ENCODE measurements at regions of chr17 and their contacts with region 1.

Region 1: DNA sequence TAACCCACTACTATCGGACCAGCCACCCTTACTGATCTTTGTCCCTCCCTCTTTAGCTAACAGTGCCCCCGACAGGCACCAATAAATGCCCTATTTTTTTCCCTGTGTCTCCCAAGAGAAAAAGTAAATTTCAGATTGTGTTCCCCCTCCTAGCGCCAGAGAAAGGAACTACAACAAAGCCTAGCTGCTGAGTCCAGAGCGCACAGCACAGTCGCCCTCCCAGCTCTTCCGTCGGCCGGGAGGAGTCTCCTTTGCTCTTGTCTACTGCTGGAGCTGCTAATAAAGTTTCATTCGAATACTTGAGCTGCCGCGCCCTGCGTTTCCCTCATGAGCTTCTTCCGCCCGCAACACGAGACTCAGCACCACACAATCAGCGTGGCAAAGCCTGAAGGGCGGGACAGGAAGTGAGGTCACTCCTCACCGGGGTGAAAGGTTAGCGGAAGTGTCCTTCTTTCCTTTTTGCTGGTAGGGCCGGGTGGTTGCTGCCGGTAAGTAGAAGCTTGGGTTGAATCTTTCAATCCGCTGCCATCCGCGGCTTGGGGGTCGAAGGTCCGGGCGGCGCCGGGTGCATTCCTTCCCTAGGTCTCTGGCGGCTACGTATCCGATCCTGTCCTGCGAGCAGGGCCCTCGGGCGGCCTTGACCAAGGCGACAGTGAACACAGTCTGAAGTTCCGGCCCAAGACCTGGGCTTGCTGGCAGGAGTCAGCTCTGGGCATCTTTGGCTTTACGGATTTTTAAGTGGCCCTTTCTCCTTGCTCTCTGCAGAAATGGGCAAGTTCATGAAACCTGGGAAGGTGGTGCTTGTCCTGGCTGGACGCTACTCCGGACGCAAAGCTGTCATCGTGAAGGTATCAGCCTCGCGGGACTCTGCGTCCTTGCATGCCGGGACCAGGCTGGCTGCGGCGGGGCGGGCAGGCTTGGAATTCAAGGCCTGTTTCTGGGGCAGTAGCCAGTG is at the start of gene RPL27:
- DNase-seq: peak; percentile 89 to 99 (median 98)
- ATAC-seq: peak; percentile 97
- H3K4me3 ChIP-seq: peak within 1 kb of the TSS; percentile 91
- H3K4me3 Mint-ChIP-seq: peak within 1 kb of the TSS; percentile 74 to 98 (median 95)
- H3K27ac ChIP-seq: peak within 1 kb of the TSS; percentile 97
- H3K27ac Mint-ChIP-seq: peak within 1 kb of the TSS; percentile 89 to 100 (median 99)
- H3K4me1 ChIP-seq: peaks cover 15 to 18% of the 10 kb centered on the region in 2 donors
- H3K4me1 Mint-ChIP-seq: peaks cover 16 to 29% (median 24%) of the 10 kb centered on the region in 7 donors
- H3K27me3 ChIP-seq: no peaks in the 10 kb centered on the region
- H3K27me3 Mint-ChIP-seq: no peaks in the 10 kb centered on the region
- total RNA-seq, gene RPL27: 951 to 1,861 (median 1,662) TPM

Region 2: DNA sequence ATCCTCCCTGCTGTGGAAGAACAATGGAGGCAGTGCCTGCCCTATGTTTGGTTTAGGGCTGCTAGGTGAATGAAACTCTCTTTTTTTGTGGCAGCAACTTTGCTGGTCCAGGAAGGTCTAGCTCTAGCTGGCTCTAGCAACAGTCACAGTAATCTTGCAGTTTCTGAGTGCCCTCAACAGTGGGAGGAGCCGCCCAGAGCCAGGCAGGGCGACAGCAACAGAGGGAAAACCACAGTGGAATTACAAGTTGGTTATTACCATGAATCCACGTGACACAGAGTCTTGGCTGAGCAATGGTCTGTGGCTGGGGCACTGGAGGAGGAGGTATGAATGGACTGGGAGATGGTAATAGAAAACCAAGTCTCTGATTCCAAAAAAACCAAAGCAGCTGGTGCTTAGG is 865.3 kb before region 1 on chr17:
- CTCF ChIA-PET with region 1: no interaction called
- POLR2A ChIA-PET with region 1: no interaction called
- intact Hi-C with region 1: no loop called
- DNase-seq: peak in 1 of 9 donors; percentile 37
- ATAC-seq: peak; percentile 58
- H3K4me3 ChIP-seq: no peak overlapping the region
- H3K4me3 Mint-ChIP-seq: peak overlapping the region in 7 of 10 donors; percentile 12 to 63 (median 41)
- H3K27ac ChIP-seq: peak overlapping the region; percentile 46
- H3K27ac Mint-ChIP-seq: peak overlapping the region; percentile 65 to 89 (median 84)
- H3K4me1 ChIP-seq: peaks cover 16 to 22% of the 10 kb centered on the region in 2 donors
- H3K4me1 Mint-ChIP-seq: peaks cover 34 to 66% (median 54%) of the 10 kb centered on the region in 7 donors
- H3K27me3 ChIP-seq: no peaks in the 10 kb centered on the region
- H3K27me3 Mint-ChIP-seq: no peaks in the 10 kb centered on the region

Region 3: GRCh38 chr17:42577532-42578281 is 420.6 kb before region 1 on chr17 and contains the start of gene PSMC3IP:
- CTCF ChIA-PET with region 1: interaction called, 3 read pairs
- POLR2A ChIA-PET with region 1: no interaction called
- intact Hi-C with region 1: loop called in 1 of 2 experiments (anchors 5 kb)
- DNase-seq: peak; percentile 74 to 95 (median 85)
- ATAC-seq: peak; percentile 98
- H3K4me3 ChIP-seq: peak within 1 kb of the TSS; percentile 96
- H3K4me3 Mint-ChIP-seq: peak within 1 kb of the TSS; percentile 86 to 100 (median 96)
- H3K27ac ChIP-seq: peak within 1 kb of the TSS; percentile 87
- H3K27ac Mint-ChIP-seq: peak within 1 kb of the TSS; percentile 86 to 99 (median 96)
- H3K4me1 ChIP-seq: peaks cover 9 to 12% of the 10 kb centered on the region in 2 donors
- H3K4me1 Mint-ChIP-seq: peaks cover 17 to 53% (median 40%) of the 10 kb centered on the region in 7 donors
- H3K27me3 ChIP-seq: no peaks in the 10 kb centered on the region
- H3K27me3 Mint-ChIP-seq: no peaks in the 10 kb centered on the region
- total RNA-seq, gene PSMC3IP: 2.7 to 14.0 (median 5.2) TPM

Region 4: DNA sequence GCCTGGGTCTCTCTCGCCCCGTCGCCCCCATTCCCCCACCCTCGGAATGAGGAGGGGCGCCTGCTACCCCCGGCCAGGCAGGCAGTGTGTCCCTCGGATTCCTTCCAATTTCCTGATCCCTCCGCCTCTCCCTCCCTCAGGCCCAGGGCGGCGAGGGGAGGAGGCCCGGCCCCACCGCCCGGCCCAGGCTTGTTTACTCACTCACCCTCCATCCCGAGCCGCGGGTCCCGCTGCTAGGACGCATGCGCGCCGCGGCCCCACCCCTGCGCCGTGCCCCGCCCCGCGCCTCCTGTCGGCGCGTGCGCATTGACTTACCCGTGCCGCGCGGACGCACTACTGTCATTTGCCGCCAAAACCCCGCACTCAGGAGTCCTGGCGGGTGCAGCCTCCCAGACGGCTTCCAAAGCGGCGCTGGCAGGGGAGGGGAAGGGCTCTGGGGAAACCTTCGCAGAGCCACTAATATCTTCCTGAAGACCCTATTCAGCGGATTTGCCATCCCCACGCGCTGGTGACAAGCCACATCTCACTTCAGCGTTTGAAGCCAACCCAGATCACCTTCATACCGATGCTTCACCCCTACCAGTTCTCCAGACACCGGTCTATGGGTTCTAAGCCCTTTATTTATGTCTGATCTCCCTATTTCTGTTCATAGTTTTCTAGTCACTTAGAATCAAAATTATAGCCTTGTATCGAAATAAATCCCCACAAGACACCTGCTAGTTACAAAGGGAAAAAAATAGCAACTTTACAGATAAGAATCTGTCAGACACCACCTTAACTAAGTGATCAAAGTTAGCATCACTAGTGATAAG is 253.2 kb before region 1 on chr17 and contains the start of gene EZH1:
- CTCF ChIA-PET with region 1: no interaction called
- POLR2A ChIA-PET with region 1: no interaction called
- intact Hi-C with region 1: loop called in 1 of 2 experiments (anchors 1 kb)
- DNase-seq: peak; percentile 88 to 96 (median 94)
- ATAC-seq: peak; percentile 97
- H3K4me3 ChIP-seq: peak within 1 kb of the TSS; percentile 78
- H3K4me3 Mint-ChIP-seq: peak within 1 kb of the TSS; percentile 83 to 99 (median 94)
- H3K27ac ChIP-seq: peak within 1 kb of the TSS; percentile 90
- H3K27ac Mint-ChIP-seq: peak within 1 kb of the TSS; percentile 86 to 97 (median 94)
- H3K4me1 ChIP-seq: peaks cover 12 to 16% of the 10 kb centered on the region in 2 donors
- H3K4me1 Mint-ChIP-seq: peaks cover 15 to 34% (median 22%) of the 10 kb centered on the region in 7 donors
- H3K27me3 ChIP-seq: no peaks in the 10 kb centered on the region
- H3K27me3 Mint-ChIP-seq: peaks cover 0 to 41% (median 11%) of the 10 kb centered on the region in 5 donors
- total RNA-seq, gene EZH1: 50.9 to 212 (median 95.4) TPM

Region 5: GRCh38 chr17:42964161-42964932 is 33.9 kb before region 1 on chr17 and contains the start of gene AARSD1:
- CTCF ChIA-PET with region 1: interaction called, 3 read pairs
- POLR2A ChIA-PET with region 1: interaction called, 8 read pairs
- intact Hi-C with region 1: loop called (anchors 1 kb)
- DNase-seq: peak; percentile 77 to 92 (median 90)
- ATAC-seq: peak; percentile 99
- H3K4me3 ChIP-seq: peak within 1 kb of the TSS; percentile 96
- H3K4me3 Mint-ChIP-seq: peak within 1 kb of the TSS; percentile 89 to 99 (median 94)
- H3K27ac ChIP-seq: peak within 1 kb of the TSS; percentile 77
- H3K27ac Mint-ChIP-seq: peak within 1 kb of the TSS; percentile 86 to 97 (median 94)
- H3K4me1 ChIP-seq: peaks cover 5 to 10% of the 10 kb centered on the region in 2 donors
- H3K4me1 Mint-ChIP-seq: peaks cover 11 to 23% (median 18%) of the 10 kb centered on the region in 7 donors
- H3K27me3 ChIP-seq: no peaks in the 10 kb centered on the region
- H3K27me3 Mint-ChIP-seq: peaks cover 0 to 2% (median 0%) of the 10 kb centered on the region in 5 donors
- total RNA-seq, gene AARSD1: 46.5 to 86.7 (median 56.6) TPM

Region 6: GRCh38 chr17:43024407-43025289 is 26.4 kb after region 1 on chr17 and contains the start of gene RND2:
- CTCF ChIA-PET with region 1: interaction called, 10 read pairs
- POLR2A ChIA-PET with region 1: interaction called, 19 read pairs
- intact Hi-C with region 1: loop called in 1 of 2 experiments (anchors 1 kb)
- DNase-seq: peak; percentile 65 to 85 (median 77)
- ATAC-seq: peak; percentile 81
- H3K4me3 ChIP-seq: peak within 1 kb of the TSS; percentile 70
- H3K4me3 Mint-ChIP-seq: peak within 1 kb of the TSS; percentile 86 to 95 (median 93)
- H3K27ac ChIP-seq: peak within 1 kb of the TSS; percentile 66
- H3K27ac Mint-ChIP-seq: peak within 1 kb of the TSS; percentile 80 to 91 (median 88)
- H3K4me1 ChIP-seq: peaks cover 21% of the 10 kb centered on the region in 2 donors
- H3K4me1 Mint-ChIP-seq: peaks cover 16 to 28% (median 21%) of the 10 kb centered on the region in 7 donors
- H3K27me3 ChIP-seq: no peaks in the 10 kb centered on the region
- H3K27me3 Mint-ChIP-seq: peaks cover 0 to 16% (median 0%) of the 10 kb centered on the region in 5 donors
- total RNA-seq, gene RND2: 0.08 to 0.74 (median 0.38) TPM in 4 of 5 experiments, not detected in the other

Region 7: GRCh38 chr17:43316522-43317142 is 318.4 kb after region 1 on chr17:
- CTCF ChIA-PET with region 1: no interaction called
- POLR2A ChIA-PET with region 1: interaction called, 20 read pairs
- intact Hi-C with region 1: no loop called
- DNase-seq: peak in 2 of 9 donors; percentile 13 to 36
- ATAC-seq: no peak
- H3K4me3 ChIP-seq: no peak overlapping the region
- H3K4me3 Mint-ChIP-seq: peak overlapping the region in 5 of 10 donors; percentile 16 to 42 (median 25)
- H3K27ac ChIP-seq: no peak overlapping the region
- H3K27ac Mint-ChIP-seq: peak overlapping the region in 7 of 9 donors; percentile 38 to 79 (median 63)
- H3K4me1 ChIP-seq: no peaks in the 10 kb centered on the region
- H3K4me1 Mint-ChIP-seq: peaks cover 5 to 11% (median 7%) of the 10 kb centered on the region in 7 donors
- H3K27me3 ChIP-seq: no peaks in the 10 kb centered on the region
- H3K27me3 Mint-ChIP-seq: no peaks in the 10 kb centered on the region

Region 8: GRCh38 chr17:43388359-43389045 is 390.2 kb after region 1 on chr17:
- CTCF ChIA-PET with region 1: no interaction called
- POLR2A ChIA-PET with region 1: interaction called, 7 read pairs
- intact Hi-C with region 1: loop called in 1 of 2 experiments (anchors 1 kb)
- DNase-seq: peak; percentile 92 to 98 (median 95)
- ATAC-seq: peak; percentile 84
- H3K4me3 ChIP-seq: peak overlapping the region; percentile 94
- H3K4me3 Mint-ChIP-seq: peak overlapping the region; percentile 91 to 99 (median 96)
- H3K27ac ChIP-seq: peak overlapping the region; percentile 95
- H3K27ac Mint-ChIP-seq: peak overlapping the region; percentile 95 to 100 (median 98)
- H3K4me1 ChIP-seq: peaks cover 4 to 15% of the 10 kb centered on the region in 2 donors
- H3K4me1 Mint-ChIP-seq: peaks cover 16 to 39% (median 31%) of the 10 kb centered on the region in 7 donors
- H3K27me3 ChIP-seq: no peaks in the 10 kb centered on the region
- H3K27me3 Mint-ChIP-seq: no peaks in the 10 kb centered on the region